ENCODE measurements at regions of chr4 and their contacts with region 1.

Region 1: GRCh38 chr4:121050300-121050699 is 22.0 kb downstream of the NDNF start:
- DNase-seq: peak in 6 of 9 donors; percentile 11 to 39 (median 26)
- ATAC-seq: peak; percentile 38
- H3K4me3 ChIP-seq: no peak overlapping the region
- H3K4me3 Mint-ChIP-seq: no peak overlapping the region
- H3K27ac ChIP-seq: no peak overlapping the region
- H3K27ac Mint-ChIP-seq: peak overlapping the region in 1 of 9 donors; percentile 51
- H3K4me1 ChIP-seq: no peaks in the 10 kb centered on the region
- H3K4me1 Mint-ChIP-seq: peaks cover 3 to 12% (median 5%) of the 10 kb centered on the region in 7 donors
- H3K27me3 ChIP-seq: no peaks in the 10 kb centered on the region
- H3K27me3 Mint-ChIP-seq: peaks cover 0 to 68% (median 0%) of the 10 kb centered on the region in 5 donors

Region 2: DNA sequence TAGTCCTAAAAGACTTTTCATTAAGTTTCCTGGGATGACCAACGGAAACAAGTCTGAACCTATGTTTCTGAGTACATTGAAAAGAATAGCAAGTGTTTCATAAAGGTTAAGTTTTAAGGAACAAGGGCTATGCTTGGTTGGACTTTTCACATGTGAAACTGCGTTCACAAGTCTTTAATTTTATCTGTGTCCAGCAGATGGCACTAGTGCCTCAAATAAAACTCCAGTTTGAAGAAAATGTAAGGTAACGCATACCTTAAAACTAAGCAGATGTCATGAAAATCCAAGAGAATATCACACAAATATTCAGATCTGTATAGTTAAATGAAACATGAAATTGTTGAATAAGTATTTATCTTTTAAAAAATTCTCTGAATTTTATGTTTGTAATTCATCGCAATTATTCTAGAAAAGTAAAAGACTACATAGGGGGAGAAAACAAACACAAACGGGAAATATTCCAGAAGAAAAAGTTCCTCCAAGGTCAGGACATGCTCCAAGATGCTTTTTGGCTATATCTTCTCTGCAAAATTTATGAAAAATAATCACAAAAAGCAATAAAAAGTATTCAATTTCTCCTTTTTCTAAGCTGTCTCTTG is 894.1 kb before region 1 on chr4:
- CTCF ChIA-PET with region 1: no interaction called
- POLR2A ChIA-PET with region 1: no interaction called
- intact Hi-C with region 1: loop called in 1 of 2 experiments (anchors 1 kb)
- DNase-seq: peak in 7 of 9 donors; percentile 22 to 63 (median 57)
- ATAC-seq: peak; percentile 63
- H3K4me3 ChIP-seq: no peak overlapping the region
- H3K4me3 Mint-ChIP-seq: no peak overlapping the region
- H3K27ac ChIP-seq: no peak overlapping the region
- H3K27ac Mint-ChIP-seq: no peak overlapping the region
- H3K4me1 ChIP-seq: no peaks in the 10 kb centered on the region
- H3K4me1 Mint-ChIP-seq: no peaks in the 10 kb centered on the region
- H3K27me3 ChIP-seq: no peaks in the 10 kb centered on the region
- H3K27me3 Mint-ChIP-seq: peaks cover 0 to 4% (median 0%) of the 10 kb centered on the region in 5 donors

Region 3: DNA sequence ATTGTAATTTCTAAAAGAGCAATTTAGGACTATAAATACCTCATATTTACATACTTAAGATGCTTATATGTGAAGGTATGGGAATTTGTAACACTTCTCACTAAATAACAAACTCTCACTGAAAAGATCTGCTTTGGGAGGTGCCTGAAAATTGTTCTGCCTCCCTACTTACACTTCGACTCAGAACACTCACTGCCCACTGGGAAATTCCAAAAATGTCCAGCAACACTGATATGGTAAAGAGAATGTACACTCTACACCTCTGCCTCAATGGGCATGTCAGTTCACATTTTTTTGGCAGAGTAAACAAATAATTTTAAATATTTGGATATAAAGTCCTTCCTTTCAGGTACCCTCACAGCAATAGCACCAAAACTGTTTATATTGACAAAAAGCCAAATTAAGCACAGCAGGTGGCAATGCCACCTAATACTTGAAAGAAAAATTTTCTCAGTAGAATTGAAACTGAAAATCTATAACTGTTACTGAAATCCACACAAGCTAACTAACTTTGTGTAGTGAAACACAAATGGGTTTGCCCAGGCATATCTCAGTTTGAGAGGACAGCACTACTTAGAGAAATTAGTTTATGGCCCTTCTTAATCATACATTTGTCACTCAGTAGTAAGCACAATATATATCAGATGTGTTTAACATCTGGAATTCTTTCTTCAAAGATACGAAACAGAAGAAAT is 194.8 kb before region 1 on chr4:
- CTCF ChIA-PET with region 1: no interaction called
- POLR2A ChIA-PET with region 1: no interaction called
- intact Hi-C with region 1: loop called in 1 of 2 experiments (anchors 1 kb)
- DNase-seq: no peak
- ATAC-seq: no peak
- H3K4me3 ChIP-seq: no peak overlapping the region
- H3K4me3 Mint-ChIP-seq: no peak overlapping the region
- H3K27ac ChIP-seq: no peak overlapping the region
- H3K27ac Mint-ChIP-seq: no peak overlapping the region
- H3K4me1 ChIP-seq: no peaks in the 10 kb centered on the region
- H3K4me1 Mint-ChIP-seq: peaks cover 0 to 9% (median 0%) of the 10 kb centered on the region in 7 donors
- H3K27me3 ChIP-seq: no peaks in the 10 kb centered on the region
- H3K27me3 Mint-ChIP-seq: peaks cover 0 to 13% (median 0%) of the 10 kb centered on the region in 5 donors

Region 4: GRCh38 chr4:120922381-120923206 is 127.7 kb before region 1 on chr4 and contains the start of gene PRDM5:
- CTCF ChIA-PET with region 1: no interaction called
- POLR2A ChIA-PET with region 1: interaction called, 3 read pairs
- intact Hi-C with region 1: loop called in 1 of 2 experiments (anchors 1 kb)
- DNase-seq: peak; percentile 6 to 37 (median 22)
- ATAC-seq: peak; percentile 67
- H3K4me3 ChIP-seq: peak within 1 kb of the TSS; percentile 72
- H3K4me3 Mint-ChIP-seq: peak within 1 kb of the TSS; percentile 82 to 98 (median 96)
- H3K27ac ChIP-seq: peak within 1 kb of the TSS; percentile 18
- H3K27ac Mint-ChIP-seq: peak within 1 kb of the TSS in 8 of 9 donors; percentile 75 to 93 (median 82)
- H3K4me1 ChIP-seq: peaks cover 0 to 5% of the 10 kb centered on the region in 2 donors
- H3K4me1 Mint-ChIP-seq: peaks cover 8 to 16% (median 13%) of the 10 kb centered on the region in 7 donors
- H3K27me3 ChIP-seq: no peaks in the 10 kb centered on the region
- H3K27me3 Mint-ChIP-seq: peaks cover 0 to 69% (median 0%) of the 10 kb centered on the region in 5 donors
- total RNA-seq, gene PRDM5: 0.29 to 1.1 (median 0.72) TPM in 4 of 5 experiments, not detected in the other

Region 5: DNA sequence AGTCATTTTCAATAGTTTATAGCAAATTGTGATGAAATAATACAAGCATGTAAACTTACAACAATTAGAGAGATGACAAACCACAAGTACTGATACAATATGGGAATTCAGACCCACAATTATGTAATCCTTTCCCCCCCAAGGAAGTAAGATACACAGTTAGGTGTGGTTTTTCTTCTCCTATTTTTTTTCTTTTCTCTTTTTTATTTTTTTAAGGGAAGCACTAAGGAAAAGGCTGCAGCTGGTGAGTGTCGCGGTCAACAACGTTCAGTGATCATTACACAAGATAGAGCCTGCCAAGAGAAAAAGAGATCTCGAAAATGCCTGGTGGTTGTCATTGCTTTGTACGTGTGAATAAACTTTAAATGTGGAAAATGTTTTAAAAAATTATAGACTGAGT is 12.2 kb after region 1 on chr4:
- CTCF ChIA-PET with region 1: no interaction called
- POLR2A ChIA-PET with region 1: no interaction called
- intact Hi-C with region 1: no loop called
- DNase-seq: no peak
- ATAC-seq: no peak
- H3K4me3 ChIP-seq: no peak overlapping the region
- H3K4me3 Mint-ChIP-seq: no peak overlapping the region
- H3K27ac ChIP-seq: no peak overlapping the region
- H3K27ac Mint-ChIP-seq: no peak overlapping the region
- H3K4me1 ChIP-seq: no peaks in the 10 kb centered on the region
- H3K4me1 Mint-ChIP-seq: peaks cover 0 to 3% (median 0%) of the 10 kb centered on the region in 7 donors
- H3K27me3 ChIP-seq: no peaks in the 10 kb centered on the region
- H3K27me3 Mint-ChIP-seq: peaks cover 5 to 63% (median 11%) of the 10 kb centered on the region in 5 donors

Region 6: DNA sequence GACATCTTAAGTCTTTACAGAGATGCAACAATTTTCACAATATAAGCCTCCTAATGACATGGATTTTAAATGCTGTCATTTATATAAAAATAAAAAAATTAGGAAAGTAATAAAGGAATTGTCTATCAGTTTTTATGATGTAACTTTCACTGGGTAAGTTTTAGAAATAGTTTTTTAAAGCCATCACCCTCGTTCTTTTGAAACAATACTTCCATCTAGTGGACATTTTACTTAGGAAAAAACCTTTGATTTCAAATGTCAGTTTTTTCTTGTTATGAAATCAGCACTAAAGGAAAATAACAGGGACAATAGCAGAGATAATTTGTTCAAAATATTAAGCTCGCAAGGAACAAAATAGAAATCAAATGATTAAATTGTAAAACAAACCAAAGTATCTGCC is 46.3 kb after region 1 on chr4:
- CTCF ChIA-PET with region 1: no interaction called
- POLR2A ChIA-PET with region 1: no interaction called
- intact Hi-C with region 1: loop called in 1 of 2 experiments (anchors 2 kb)
- DNase-seq: peak in 5 of 9 donors; percentile 29 to 52 (median 41)
- ATAC-seq: no peak
- H3K4me3 ChIP-seq: no peak overlapping the region
- H3K4me3 Mint-ChIP-seq: no peak overlapping the region
- H3K27ac ChIP-seq: no peak overlapping the region
- H3K27ac Mint-ChIP-seq: no peak overlapping the region
- H3K4me1 ChIP-seq: no peaks in the 10 kb centered on the region
- H3K4me1 Mint-ChIP-seq: peaks cover 0 to 5% (median 0%) of the 10 kb centered on the region in 7 donors
- H3K27me3 ChIP-seq: no peaks in the 10 kb centered on the region
- H3K27me3 Mint-ChIP-seq: peaks cover 0 to 30% (median 0%) of the 10 kb centered on the region in 5 donors